GM12878 (cell line): ENCODE measurements at regions of chr1 and their contacts with region 1.

Region 1: GRCh38 chr1:31923901-31924535 is 14.2 kb downstream of the PTP4A2 start:
- DNase-seq: no peak
- ATAC-seq: 0 out of 3 replicates have a peak, but pooled peaks have one; percentile 11
- H3K4me3 ChIP-seq: peak overlapping the region; percentile 43; the same call in 1 of the 2 replicates
- H3K27ac ChIP-seq: 0 out of 2 replicates have a peak overlapping the region, but pooled peaks have one; percentile 27
- H3K4me1 ChIP-seq: peaks cover 19% of the 10 kb centered on the region
- H3K27me3 ChIP-seq: no peaks in the 10 kb centered on the region
- CTCF ChIP-seq: no peak
- EP300 ChIP-seq: no peak
- POLR2A ChIP-seq: no peak
- RAD21 ChIP-seq: no peak

Region 2: GRCh38 chr1:31866450-31867032 is 57.5 kb before region 1 on chr1:
- CTCF ChIA-PET with region 1: no interaction called
- POLR2A ChIA-PET with region 1: no interaction called
- RAD21 ChIA-PET with region 1: no interaction called
- SMC1A ChIA-PET with region 1: no interaction called
- in situ Hi-C with region 1: no loop called
- intact Hi-C with region 1: no loop called
- DNase-seq: no peak
- ATAC-seq: peak; percentile 94
- H3K4me3 ChIP-seq: no peak overlapping the region
- H3K27ac ChIP-seq: no peak overlapping the region
- H3K4me1 ChIP-seq: peaks cover 10% of the 10 kb centered on the region
- H3K27me3 ChIP-seq: no peaks in the 10 kb centered on the region
- CTCF ChIP-seq: no peak
- EP300 ChIP-seq: no peak; a peak in 1 of 4 replicates
- POLR2A ChIP-seq: no peak
- RAD21 ChIP-seq: peak; percentile 9; the same call in 1 of the 2 replicates

Region 3: DNA sequence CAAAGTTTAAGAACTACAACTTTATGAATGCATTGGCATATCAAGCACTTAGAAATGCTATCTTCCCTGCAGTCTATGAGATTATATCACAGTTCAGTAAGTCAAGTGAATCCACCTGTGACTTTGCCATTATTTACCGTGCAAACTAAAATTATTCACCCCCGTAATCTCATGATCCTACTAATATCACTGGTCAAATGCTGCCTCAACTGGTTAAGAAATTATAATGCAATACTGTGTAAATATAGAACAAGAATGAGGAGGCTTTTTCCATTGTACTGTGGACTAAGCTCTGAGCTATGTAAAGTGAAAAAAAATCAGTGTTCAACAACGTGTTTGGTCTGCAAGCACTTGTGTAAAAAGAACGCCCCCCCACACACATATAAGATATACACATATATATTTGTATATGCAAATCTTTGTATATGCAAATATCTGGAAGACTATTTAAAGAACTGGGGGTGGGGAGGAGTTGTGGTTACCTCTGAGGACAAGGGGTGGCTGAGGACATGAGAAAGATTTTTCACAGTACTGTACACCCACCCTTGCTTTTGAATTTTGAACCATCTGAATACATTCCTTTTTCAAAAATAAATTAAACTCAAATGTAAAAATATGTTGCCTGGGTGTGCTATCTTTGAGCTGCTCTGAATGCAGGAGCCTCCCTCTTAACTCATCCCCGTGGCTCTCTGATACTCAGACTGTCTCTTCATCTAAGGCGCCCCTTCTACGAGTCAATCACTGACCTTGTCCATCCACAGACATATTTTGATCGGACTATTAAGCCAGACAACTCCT is 42.9 kb before region 1 on chr1:
- CTCF ChIA-PET with region 1: no interaction called
- POLR2A ChIA-PET with region 1: interaction called, 3 read pairs
- RAD21 ChIA-PET with region 1: interaction called, 3 read pairs
- SMC1A ChIA-PET with region 1: interaction called, 12 read pairs
- in situ Hi-C with region 1: no loop called
- intact Hi-C with region 1: no loop called
- DNase-seq: no peak
- ATAC-seq: peak; percentile 78
- H3K4me3 ChIP-seq: peak overlapping the region; percentile 39; the same call in 1 of the 2 replicates
- H3K27ac ChIP-seq: no peak overlapping the region
- H3K4me1 ChIP-seq: peaks cover 20% of the 10 kb centered on the region
- H3K27me3 ChIP-seq: no peaks in the 10 kb centered on the region
- CTCF ChIP-seq: no peak
- EP300 ChIP-seq: no peak
- POLR2A ChIP-seq: no peak
- RAD21 ChIP-seq: no peak